ENCODE measurements at regions of chr5 and their contacts with region 1.

Region 1: DNA sequence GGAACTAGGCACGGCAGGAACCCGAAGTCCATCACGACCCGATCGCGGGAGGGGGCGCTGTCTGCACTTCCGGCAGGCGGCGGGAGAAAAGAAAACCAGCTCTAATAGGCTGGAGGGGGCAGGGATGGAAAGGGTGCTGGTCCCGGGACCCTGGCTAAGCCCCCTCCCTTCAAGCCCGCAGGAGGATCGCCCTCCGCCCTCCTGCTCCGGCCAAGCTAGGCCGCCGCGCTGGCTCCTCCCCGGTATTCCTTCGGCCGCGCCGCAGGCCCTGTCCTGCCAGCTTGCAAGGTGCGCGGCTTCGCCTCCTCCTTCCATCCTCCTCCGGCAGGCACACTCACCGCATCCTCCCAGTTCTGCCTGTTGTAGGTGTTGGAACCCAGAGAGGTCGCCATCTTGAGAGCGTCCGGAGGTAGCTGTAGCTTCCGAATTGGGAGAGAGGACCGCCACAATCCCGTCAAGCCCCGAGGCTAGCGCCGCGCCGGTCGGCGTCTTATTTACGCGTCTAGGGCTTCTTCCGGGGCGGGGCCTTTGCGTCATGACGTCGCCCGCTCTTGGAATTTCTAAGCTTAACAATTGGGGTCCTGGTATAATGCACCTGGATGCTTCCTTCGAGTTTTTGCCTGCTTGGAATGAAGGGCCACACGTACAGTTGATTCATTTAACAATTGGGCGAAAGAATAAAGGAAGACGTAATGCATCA is at the start of gene RBM22:
- DNase-seq: peak; percentile 89
- H3K4me3 Mint-ChIP-seq: no peak within 1 kb of the TSS
- H3K27ac Mint-ChIP-seq: no peak within 1 kb of the TSS
- H3K4me1 Mint-ChIP-seq: peaks cover 5% of the 10 kb centered on the region
- H3K27me3 Mint-ChIP-seq: no peaks in the 10 kb centered on the region
- total RNA-seq, gene RBM22: 77.5 and 81.9 TPM in 2 replicates

Region 2: GRCh38 chr5:150357326-150358260 is 343.2 kb before region 1 on chr5 and contains the start of gene TCOF1:
- intact Hi-C with region 1: loop called (anchors 2 kb)
- DNase-seq: peak; percentile 97
- H3K4me3 Mint-ChIP-seq: peak within 1 kb of the TSS; percentile 93
- H3K27ac Mint-ChIP-seq: peak within 1 kb of the TSS; percentile 91
- H3K4me1 Mint-ChIP-seq: peaks cover 39% of the 10 kb centered on the region
- H3K27me3 Mint-ChIP-seq: no peaks in the 10 kb centered on the region
- total RNA-seq, gene TCOF1: 130 and 131 TPM in 2 replicates

Region 3: DNA sequence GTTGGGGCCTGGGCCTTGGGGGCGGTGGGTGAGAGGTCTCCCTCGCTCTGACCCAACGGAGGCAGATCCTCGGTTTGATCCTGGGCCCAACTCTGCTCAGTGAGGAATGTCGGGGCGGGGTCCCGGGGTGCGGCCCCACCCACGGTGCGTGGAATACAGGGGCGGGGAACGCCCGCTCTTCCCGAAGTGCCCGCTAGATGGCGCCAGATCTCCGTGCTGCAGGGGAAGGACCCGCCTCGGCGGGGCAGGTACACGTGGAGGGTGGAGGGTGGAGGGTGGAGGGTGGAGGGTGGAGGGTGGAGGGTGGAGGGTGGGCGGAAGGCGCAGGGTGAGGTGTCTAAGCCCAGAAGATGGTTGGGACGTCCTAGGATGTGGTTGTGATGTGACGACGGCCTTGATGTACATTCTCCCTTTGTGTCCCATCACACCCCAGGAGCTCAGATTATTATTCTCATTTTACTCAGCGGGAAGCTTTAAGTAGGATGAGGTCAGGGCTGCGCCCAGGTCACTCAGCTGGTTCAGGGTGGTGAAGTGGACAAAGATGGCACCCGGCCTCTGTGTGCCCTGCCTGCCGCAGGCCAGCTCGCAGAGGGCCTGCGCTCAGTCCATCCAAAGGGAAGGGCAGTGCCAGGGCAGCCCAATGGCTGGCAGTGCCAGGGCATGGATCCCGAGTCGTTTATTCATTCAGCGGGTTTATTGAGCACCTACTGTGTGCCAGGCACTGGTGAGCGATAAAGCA is 241.8 kb before region 1 on chr5:
- intact Hi-C with region 1: loop called (anchors 2 kb)
- DNase-seq: peak; percentile 75
- H3K4me3 Mint-ChIP-seq: no peak overlapping the region
- H3K27ac Mint-ChIP-seq: no peak overlapping the region
- H3K4me1 Mint-ChIP-seq: peaks cover 19% of the 10 kb centered on the region
- H3K27me3 Mint-ChIP-seq: peaks cover 1% of the 10 kb centered on the region

Region 4: GRCh38 chr5:150672237-150672883 is 28.4 kb before region 1 on chr5:
- intact Hi-C with region 1: no loop called
- DNase-seq: no peak
- H3K4me3 Mint-ChIP-seq: peak overlapping the region; percentile 70
- H3K27ac Mint-ChIP-seq: no peak overlapping the region
- H3K4me1 Mint-ChIP-seq: no peaks in the 10 kb centered on the region
- H3K27me3 Mint-ChIP-seq: peaks cover 18% of the 10 kb centered on the region

Region 5: DNA sequence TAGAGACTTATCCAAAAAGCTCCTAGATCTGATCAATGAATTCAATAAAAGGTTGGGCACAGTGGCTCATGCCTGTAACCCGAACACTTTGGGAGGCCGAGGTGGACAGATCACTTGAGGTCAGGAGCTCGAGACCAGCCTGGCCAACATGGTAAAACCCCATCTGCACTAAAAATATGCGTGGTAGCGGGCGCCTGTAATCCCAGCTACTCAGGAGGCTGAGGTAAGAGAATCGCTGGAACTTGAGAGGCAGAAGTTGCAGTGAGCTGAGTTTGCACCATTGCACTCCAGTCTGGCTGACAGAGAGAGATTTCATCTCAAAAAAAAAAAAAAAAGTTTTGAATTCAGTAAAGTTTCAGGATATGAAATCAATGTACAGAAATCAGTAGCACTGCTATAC is 38.1 kb after region 1 on chr5:
- intact Hi-C with region 1: loop called (anchors 2 kb)
- DNase-seq: no peak
- H3K4me3 Mint-ChIP-seq: no peak overlapping the region
- H3K27ac Mint-ChIP-seq: no peak overlapping the region
- H3K4me1 Mint-ChIP-seq: peaks cover 85% of the 10 kb centered on the region
- H3K27me3 Mint-ChIP-seq: no peaks in the 10 kb centered on the region

Region 6: GRCh38 chr5:150789943-150790611 is 89.3 kb after region 1 on chr5:
- intact Hi-C with region 1: loop called (anchors 2 kb)
- DNase-seq: peak; percentile 63
- H3K4me3 Mint-ChIP-seq: peak overlapping the region; percentile 78
- H3K27ac Mint-ChIP-seq: peak overlapping the region; percentile 87
- H3K4me1 Mint-ChIP-seq: peaks cover 59% of the 10 kb centered on the region
- H3K27me3 Mint-ChIP-seq: no peaks in the 10 kb centered on the region

Region 7: GRCh38 chr5:151157426-151158286 is 456.9 kb after region 1 on chr5 and contains the start of gene ANXA6:
- intact Hi-C with region 1: loop called (anchors 1 kb)
- DNase-seq: peak; percentile 66
- H3K4me3 Mint-ChIP-seq: peak within 1 kb of the TSS; percentile 94
- H3K27ac Mint-ChIP-seq: peak within 1 kb of the TSS; percentile 92
- H3K4me1 Mint-ChIP-seq: peaks cover 58% of the 10 kb centered on the region
- H3K27me3 Mint-ChIP-seq: peaks cover 2% of the 10 kb centered on the region
- total RNA-seq, gene ANXA6: 286 and 301 TPM in 2 replicates